ENCODE measurements at regions of chr17 and their contacts with region 1.

Region 1: GRCh38 chr17:76623271-76624146 is 20.0 kb downstream of the ST6GALNAC1 start:
- DNase-seq: peak; percentile 83
- ATAC-seq: peak; percentile 94
- H3K4me3 ChIP-seq: peak overlapping the region; percentile 6; the same call in 1 of the 2 replicates
- H3K27ac ChIP-seq: no peak overlapping the region
- H3K4me1 ChIP-seq: peaks cover 9% of the 10 kb centered on the region
- H3K27me3 ChIP-seq: no peaks in the 10 kb centered on the region
- CTCF ChIP-seq: peak; percentile 95

Region 2: GRCh38 chr17:76585818-76586593 is 37.5 kb before region 1 on chr17 and contains the start of gene ST6GALNAC2:
- CTCF ChIA-PET with region 1: interaction called, 8 read pairs
- POLR2A ChIA-PET with region 1: no interaction called
- intact Hi-C with region 1: loop called (anchors 2 kb)
- DNase-seq: peak; percentile 84
- ATAC-seq: peak; percentile 94
- H3K4me3 ChIP-seq: peak within 1 kb of the TSS; percentile 80
- H3K27ac ChIP-seq: no peak within 1 kb of the TSS
- H3K4me1 ChIP-seq: 0 out of 2 replicates have a peak, but pooled peaks cover 4% of the 10 kb centered on the region
- H3K27me3 ChIP-seq: no peaks in the 10 kb centered on the region
- CTCF ChIP-seq: peak; percentile 60
- total RNA-seq, gene ST6GALNAC2: 1.0 and 6.4 TPM in 2 replicates

Region 3: GRCh38 chr17:76643553-76644148 is 20.1 kb after region 1 on chr17 and contains the start of gene ST6GALNAC1:
- CTCF ChIA-PET with region 1: no interaction called
- POLR2A ChIA-PET with region 1: no interaction called
- intact Hi-C with region 1: no loop called
- DNase-seq: peak; percentile 65
- ATAC-seq: peak; percentile 86
- H3K4me3 ChIP-seq: no peak within 1 kb of the TSS
- H3K27ac ChIP-seq: peak within 1 kb of the TSS; percentile 31
- H3K4me1 ChIP-seq: peaks cover 28% of the 10 kb centered on the region
- H3K27me3 ChIP-seq: no peaks in the 10 kb centered on the region
- CTCF ChIP-seq: no peak
- total RNA-seq, gene ST6GALNAC1: 2.6 and 4.1 TPM in 2 replicates

Region 4: DNA sequence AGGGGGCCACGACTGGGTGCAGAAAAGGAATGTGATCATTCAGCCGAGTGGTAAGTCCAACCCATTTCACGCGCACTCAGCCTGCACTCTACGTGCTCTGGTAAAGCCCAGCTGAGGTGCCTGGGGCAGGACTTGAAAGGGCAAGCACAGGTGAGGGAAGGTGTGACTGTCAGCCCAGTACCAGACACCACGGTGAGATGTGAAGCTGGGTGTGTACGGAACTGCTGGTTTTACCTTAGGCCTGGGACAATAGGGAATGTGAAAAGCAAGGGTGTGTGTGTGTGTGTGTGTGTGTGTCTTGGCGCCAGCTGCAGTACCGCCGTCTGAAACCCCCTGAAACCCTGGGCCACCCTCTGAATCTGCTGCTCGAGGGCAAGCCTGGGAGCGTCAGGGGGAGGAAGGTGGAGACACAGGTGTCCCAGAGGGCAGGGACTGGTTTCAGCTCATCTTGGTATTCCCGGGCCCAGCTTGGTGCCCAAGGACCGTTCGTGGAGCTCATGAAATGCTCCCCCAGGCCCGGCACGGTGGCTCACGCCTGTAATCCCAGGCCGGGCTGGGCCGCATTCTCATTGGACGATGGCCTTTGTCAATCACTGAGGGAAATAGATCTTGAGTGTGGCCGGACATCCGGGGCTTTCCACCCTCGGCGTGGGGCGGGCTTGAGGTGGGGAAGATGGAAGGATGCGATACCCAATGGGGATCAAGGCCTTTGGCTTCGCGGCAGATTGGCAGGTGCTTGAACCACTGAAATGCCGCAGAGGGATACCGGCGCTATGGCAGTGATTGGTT is 47.8 kb after region 1 on chr17:
- CTCF ChIA-PET with region 1: no interaction called
- POLR2A ChIA-PET with region 1: no interaction called
- intact Hi-C with region 1: loop called (anchors 5 kb)
- DNase-seq: peak; percentile 100
- ATAC-seq: peak; percentile 99
- H3K4me3 ChIP-seq: peak overlapping the region; percentile 72
- H3K27ac ChIP-seq: no peak overlapping the region
- H3K4me1 ChIP-seq: peaks cover 14% of the 10 kb centered on the region
- H3K27me3 ChIP-seq: no peaks in the 10 kb centered on the region
- CTCF ChIP-seq: no peak

Region 5: DNA sequence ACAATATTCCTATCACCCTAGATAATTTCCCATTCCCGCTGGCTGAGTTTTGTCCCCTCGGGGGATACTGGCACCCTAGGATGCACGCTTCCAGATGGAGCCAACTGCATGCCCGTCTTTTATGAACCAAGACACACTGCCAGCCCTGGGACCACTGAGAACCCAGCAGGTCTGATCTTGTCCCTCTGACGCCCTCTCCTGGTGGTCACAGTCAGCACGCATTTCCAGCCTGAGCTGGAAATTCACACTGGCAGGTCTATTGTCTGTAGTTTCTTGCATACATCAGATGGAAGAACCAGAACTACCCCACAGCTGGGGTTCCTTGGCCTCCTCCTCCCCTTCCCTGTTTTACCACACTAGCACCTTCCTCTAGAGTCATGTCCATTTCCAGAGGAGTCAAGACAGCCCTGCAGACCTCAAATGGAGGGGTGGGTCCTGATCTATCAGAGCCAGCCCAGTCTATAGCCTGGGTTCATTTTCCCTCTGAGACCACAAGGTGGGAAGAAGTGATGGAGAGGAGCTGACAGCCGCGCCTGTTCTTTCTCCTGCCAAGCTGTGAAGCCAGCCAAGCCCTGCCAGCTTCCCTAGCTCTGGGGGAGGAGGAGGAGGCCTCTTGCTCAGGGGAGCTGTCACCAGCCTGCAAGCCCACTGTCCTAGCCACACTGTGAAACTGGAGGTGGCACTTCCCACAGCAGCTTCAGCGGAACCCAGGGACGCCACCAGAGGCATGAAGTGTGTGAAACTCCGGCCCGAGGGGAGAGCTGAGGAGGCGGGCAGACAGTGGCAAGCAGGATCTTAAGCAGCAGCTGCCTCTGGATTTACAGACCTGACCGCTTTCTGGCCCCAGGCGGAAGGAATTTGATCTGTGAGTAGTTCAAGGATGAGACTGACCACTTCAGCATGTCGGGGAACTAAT is 58.0 kb after region 1 on chr17:
- CTCF ChIA-PET with region 1: interaction called, 4 read pairs
- POLR2A ChIA-PET with region 1: no interaction called
- intact Hi-C with region 1: loop called (anchors 2 kb)
- DNase-seq: peak; percentile 83
- ATAC-seq: peak; percentile 86
- H3K4me3 ChIP-seq: no peak overlapping the region
- H3K27ac ChIP-seq: no peak overlapping the region
- H3K4me1 ChIP-seq: no peaks in the 10 kb centered on the region
- H3K27me3 ChIP-seq: no peaks in the 10 kb centered on the region
- CTCF ChIP-seq: peak; percentile 96

Region 6: GRCh38 chr17:76758570-76758969 is 135.1 kb after region 1 on chr17:
- CTCF ChIA-PET with region 1: interaction called, 10 read pairs
- POLR2A ChIA-PET with region 1: no interaction called
- intact Hi-C with region 1: no loop called
- DNase-seq: no peak
- ATAC-seq: no peak
- H3K4me3 ChIP-seq: no peak overlapping the region
- H3K27ac ChIP-seq: no peak overlapping the region
- H3K4me1 ChIP-seq: no peaks in the 10 kb centered on the region
- H3K27me3 ChIP-seq: no peaks in the 10 kb centered on the region
- CTCF ChIP-seq: no peak

Region 7: DNA sequence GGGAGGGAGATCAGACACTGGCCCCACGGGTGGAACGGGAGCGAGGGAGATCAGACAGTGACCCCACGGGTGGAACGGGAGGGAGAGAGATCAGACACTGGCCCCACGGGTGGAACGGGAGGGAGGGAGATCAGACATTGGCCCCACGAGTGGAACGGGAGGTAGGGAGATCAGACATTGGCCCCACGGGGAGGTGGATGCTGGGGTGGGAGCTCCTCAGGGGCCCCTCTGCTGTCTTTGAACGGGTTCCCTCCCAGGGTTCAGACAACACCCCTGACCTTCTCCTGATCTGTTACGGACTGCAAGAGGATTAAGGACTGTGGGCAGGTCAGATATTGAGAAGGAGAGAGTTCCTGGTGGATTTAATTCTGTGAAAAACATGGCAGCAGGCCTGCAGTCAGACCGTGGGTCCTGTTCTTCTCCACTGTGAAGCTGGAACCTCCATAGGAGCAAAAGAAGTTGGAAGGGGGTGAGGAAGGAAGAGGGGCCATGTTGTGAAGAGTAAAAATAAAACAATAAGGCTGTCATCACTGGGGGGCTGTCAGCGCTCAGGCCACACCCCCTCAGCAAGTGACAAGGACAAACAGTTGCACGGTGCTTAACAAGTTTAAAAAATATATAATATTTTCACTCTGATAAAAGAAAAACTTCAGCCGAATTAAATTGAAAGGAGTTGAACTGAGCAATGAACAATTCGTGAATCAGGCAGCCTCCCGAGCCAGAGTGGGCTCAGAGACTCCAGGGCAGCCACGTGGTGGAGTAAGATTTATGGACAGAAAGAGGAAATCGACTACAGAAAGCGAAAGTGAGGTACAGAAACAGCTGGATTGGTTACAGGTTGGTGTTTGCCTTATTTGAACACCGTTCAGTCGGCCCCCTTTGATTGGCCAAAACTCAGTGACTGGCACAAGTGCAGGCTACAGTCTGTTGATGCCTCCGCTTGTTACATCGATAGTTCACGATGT is 986.3 kb after region 1 on chr17:
- CTCF ChIA-PET with region 1: no interaction called
- POLR2A ChIA-PET with region 1: no interaction called
- intact Hi-C with region 1: no loop called
- DNase-seq: no peak
- ATAC-seq: no peak
- H3K4me3 ChIP-seq: no peak overlapping the region
- H3K27ac ChIP-seq: no peak overlapping the region
- H3K4me1 ChIP-seq: no peaks in the 10 kb centered on the region
- H3K27me3 ChIP-seq: peaks cover 71% of the 10 kb centered on the region
- CTCF ChIP-seq: no peak